PC-3 (cell line): ENCODE measurements at regions of chr6 and their contacts with region 1.

Region 1: GRCh38 chr6:143397229-143398222 is 53.0 kb downstream of the ADAT2 start:
- DNase-seq: peak; percentile 92
- ATAC-seq: peak; percentile 79
- H3K4me3 ChIP-seq: peak overlapping the region; percentile 47
- H3K27ac ChIP-seq: peak overlapping the region; percentile 95
- H3K4me1 ChIP-seq: peaks cover 49% of the 10 kb centered on the region
- H3K27me3 ChIP-seq: no peaks in the 10 kb centered on the region
- CTCF ChIP-seq: no peak

Region 2: GRCh38 chr6:143337201-143337949 is 60.2 kb before region 1 on chr6:
- CTCF ChIA-PET with region 1: no interaction called
- POLR2A ChIA-PET with region 1: interaction called, 4 read pairs
- intact Hi-C with region 1: loop called (anchors 2 kb)
- DNase-seq: peak; percentile 37
- ATAC-seq: no peak
- H3K4me3 ChIP-seq: no peak overlapping the region
- H3K27ac ChIP-seq: peak overlapping the region; percentile 100
- H3K4me1 ChIP-seq: peaks cover 61% of the 10 kb centered on the region
- H3K27me3 ChIP-seq: no peaks in the 10 kb centered on the region
- CTCF ChIP-seq: peak; percentile 62

Region 3: DNA sequence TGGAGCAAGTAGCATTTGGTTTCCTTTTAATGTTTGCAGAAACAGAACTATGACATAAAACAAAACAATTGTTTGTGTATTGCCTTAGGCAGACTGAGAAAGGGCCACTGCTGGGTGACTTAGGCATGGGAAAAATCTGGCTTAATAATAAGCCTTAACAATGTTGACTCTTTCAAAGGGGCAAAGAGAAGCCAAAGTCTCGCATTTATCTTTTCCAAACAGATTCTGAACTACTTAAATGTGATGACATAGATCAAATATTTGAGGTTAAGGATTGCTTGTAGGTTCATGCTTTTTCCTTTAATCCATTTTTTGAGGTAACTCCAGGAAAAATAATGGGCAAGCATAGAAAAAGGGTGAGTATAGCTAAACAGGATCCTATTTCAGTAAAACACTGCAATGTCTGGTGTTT is 13.3 kb after region 1 on chr6:
- CTCF ChIA-PET with region 1: no interaction called
- POLR2A ChIA-PET with region 1: no interaction called
- intact Hi-C with region 1: loop called (anchors 2 kb)
- DNase-seq: peak; percentile 88
- ATAC-seq: peak; percentile 70
- H3K4me3 ChIP-seq: no peak overlapping the region
- H3K27ac ChIP-seq: peak overlapping the region; percentile 100
- H3K4me1 ChIP-seq: peaks cover 49% of the 10 kb centered on the region
- H3K27me3 ChIP-seq: no peaks in the 10 kb centered on the region
- CTCF ChIP-seq: no peak